ENCODE measurements at regions of chr3 and their contacts with region 1.

Region 1: DNA sequence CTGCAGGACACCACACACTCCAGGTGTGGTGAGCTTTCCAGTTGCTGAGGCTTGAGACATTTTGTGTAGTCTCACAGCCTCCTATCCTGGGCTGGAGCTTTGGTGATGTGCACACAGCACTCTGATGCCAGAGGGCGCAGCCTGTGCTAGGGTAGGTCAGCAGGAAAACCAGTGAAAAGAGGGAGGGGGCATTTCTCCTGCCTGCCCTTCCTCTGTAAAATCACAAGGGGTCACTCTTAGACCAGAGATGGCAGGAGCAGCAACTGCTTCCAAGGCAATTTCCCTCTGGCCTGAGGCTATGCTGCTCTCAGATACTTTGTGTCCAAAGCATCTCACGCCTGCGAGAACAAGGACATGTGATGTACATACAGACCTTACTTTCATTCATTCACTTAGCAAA is 16.5 kb upstream of the MUSTN1 start:
- DNase-seq: peak; percentile 38
- ATAC-seq: peak; percentile 96
- H3K4me3 ChIP-seq: no peak overlapping the region
- H3K27ac ChIP-seq: no peak overlapping the region
- H3K4me1 ChIP-seq: no peaks in the 10 kb centered on the region
- H3K27me3 ChIP-seq: no peaks in the 10 kb centered on the region
- CTCF ChIP-seq: peak; percentile 66 to 74 (median 69); a peak in 5 of 6 replicates
- POLR2A ChIP-seq: no peak
- RAD21 ChIP-seq: peak; percentile 92

Region 2: DNA sequence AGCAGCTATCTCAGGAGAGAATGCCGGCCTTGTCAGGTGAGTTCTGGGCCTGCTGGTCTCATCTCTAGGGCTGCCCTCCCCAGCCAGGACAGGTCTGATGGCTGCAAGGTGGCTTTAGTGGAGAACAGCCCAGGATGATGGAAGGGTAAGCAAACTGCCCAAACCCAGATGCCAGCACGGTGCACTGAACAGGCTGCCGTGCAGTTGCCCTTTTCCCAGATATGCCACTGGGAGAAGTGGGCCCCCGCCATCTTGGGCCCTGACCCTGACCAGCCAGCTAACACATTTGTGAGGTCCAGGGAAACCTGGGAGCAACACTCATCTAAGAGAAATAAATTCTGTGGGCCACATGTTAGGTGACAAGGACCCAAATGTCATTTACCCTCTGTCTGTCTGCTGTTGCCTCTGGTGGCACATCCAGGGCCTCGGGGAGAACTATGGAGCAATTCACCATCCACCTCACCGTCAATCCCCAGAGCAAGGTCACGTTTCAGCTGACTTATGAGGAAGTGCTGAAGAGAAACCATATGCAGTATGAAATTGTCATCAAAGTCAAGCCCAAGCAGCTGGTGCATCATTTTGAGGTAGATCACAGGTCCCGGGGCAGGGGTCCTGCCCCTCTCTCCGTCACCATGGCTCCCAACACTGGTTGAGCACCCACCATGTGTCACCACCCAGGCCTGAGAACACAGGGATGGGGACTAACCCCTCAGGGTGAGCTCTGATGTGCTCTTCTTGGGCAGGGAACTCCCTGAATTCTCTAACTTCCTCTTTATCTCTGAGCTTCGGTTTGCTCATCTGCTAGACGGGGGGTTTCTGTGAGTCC is 72.1 kb before region 1 on chr3:
- CTCF ChIA-PET with region 1: no interaction called
- POLR2A ChIA-PET with region 1: no interaction called
- RAD21 ChIA-PET with region 1: no interaction called
- intact Hi-C with region 1: no loop called
- DNase-seq: no peak
- ATAC-seq: no peak
- H3K4me3 ChIP-seq: no peak overlapping the region
- H3K27ac ChIP-seq: no peak overlapping the region
- H3K4me1 ChIP-seq: peaks cover 0 to 8% of the 10 kb centered on the region in 2 experiments; a peak in 1 of 4 replicates
- H3K27me3 ChIP-seq: peaks cover 30% of the 10 kb centered on the region
- CTCF ChIP-seq: no peak
- POLR2A ChIP-seq: no peak
- RAD21 ChIP-seq: no peak

Region 3: DNA sequence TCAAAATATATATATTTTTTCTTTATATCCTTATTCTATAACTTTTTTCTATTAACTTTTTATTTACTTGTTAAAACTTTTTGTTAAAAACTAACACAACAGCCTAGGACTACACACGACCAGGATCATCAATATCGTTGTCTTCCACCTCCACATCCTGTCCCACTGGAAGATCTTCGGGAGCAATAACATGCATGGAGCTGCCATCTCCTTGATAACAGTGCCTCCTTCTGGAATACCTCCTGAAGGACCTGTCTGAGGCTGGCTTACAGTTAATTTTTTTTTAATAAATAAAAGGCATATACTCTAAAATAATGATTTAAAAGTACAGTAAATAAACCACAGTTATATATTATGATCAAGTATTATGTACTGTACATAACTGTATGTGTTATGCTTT is 135.6 kb after region 1 on chr3:
- CTCF ChIA-PET with region 1: no interaction called
- POLR2A ChIA-PET with region 1: no interaction called
- RAD21 ChIA-PET with region 1: no interaction called
- intact Hi-C with region 1: loop called (anchors 1 kb)
- DNase-seq: no peak
- ATAC-seq: no peak
- H3K4me3 ChIP-seq: no peak overlapping the region
- H3K27ac ChIP-seq: no peak overlapping the region
- H3K4me1 ChIP-seq: no peaks in the 10 kb centered on the region
- H3K27me3 ChIP-seq: no peaks in the 10 kb centered on the region
- CTCF ChIP-seq: peak in 2 of 3 experiments; percentile 36 to 39; a peak in 3 of 6 replicates
- POLR2A ChIP-seq: no peak
- RAD21 ChIP-seq: peak; percentile 57

Region 4: GRCh38 chr3:53056442-53056841 is 205.1 kb after region 1 on chr3:
- CTCF ChIA-PET with region 1: no interaction called
- POLR2A ChIA-PET with region 1: no interaction called
- RAD21 ChIA-PET with region 1: no interaction called
- intact Hi-C with region 1: loop called (anchors 1 kb)
- DNase-seq: no peak
- ATAC-seq: peak; percentile 98
- H3K4me3 ChIP-seq: no peak overlapping the region
- H3K27ac ChIP-seq: no peak overlapping the region
- H3K4me1 ChIP-seq: no peaks in the 10 kb centered on the region
- H3K27me3 ChIP-seq: no peaks in the 10 kb centered on the region
- CTCF ChIP-seq: peak in 2 of 3 experiments; percentile 54 to 61; a peak in 4 of 6 replicates
- POLR2A ChIP-seq: no peak
- RAD21 ChIP-seq: peak; percentile 30

Region 5: GRCh38 chr3:53072653-53073552 is 221.6 kb after region 1 on chr3:
- CTCF ChIA-PET with region 1: no interaction called
- POLR2A ChIA-PET with region 1: no interaction called
- RAD21 ChIA-PET with region 1: no interaction called
- intact Hi-C with region 1: loop called (anchors 1 kb)
- DNase-seq: peak; percentile 48
- ATAC-seq: peak; percentile 93
- H3K4me3 ChIP-seq: peak overlapping the region; percentile 46 to 62
- H3K27ac ChIP-seq: peak overlapping the region; percentile 47; the same call in 1 of the 2 replicates
- H3K4me1 ChIP-seq: peaks cover 6 to 16% of the 10 kb centered on the region in 2 experiments; a peak in 3 of 4 replicates
- H3K27me3 ChIP-seq: no peaks in the 10 kb centered on the region
- CTCF ChIP-seq: peak; percentile 76 to 91 (median 89); a peak in 5 of 6 replicates
- POLR2A ChIP-seq: peak; percentile 39
- RAD21 ChIP-seq: peak; percentile 95

Region 6: DNA sequence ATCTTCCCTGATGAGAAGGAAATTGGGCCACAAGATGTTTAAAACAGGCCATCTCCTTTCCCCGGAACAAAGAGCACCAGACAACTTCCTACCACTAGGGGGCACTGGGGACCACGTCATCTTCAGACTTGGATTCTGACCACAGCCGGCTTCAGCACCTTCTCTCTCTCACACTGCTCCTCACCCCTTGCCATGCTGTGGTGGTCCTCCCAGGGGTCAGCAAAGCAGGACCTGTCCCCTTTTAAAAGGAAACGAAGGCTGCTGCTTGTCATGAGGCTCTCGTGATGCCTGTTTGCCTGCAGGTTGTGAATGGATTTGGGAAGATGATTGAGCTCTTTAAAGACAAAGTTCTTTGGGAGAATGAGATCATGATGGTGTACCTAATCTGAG is 262.7 kb after region 1 on chr3:
- CTCF ChIA-PET with region 1: interaction called, 3 read pairs
- POLR2A ChIA-PET with region 1: no interaction called
- RAD21 ChIA-PET with region 1: no interaction called
- intact Hi-C with region 1: loop called (anchors 1 kb)
- DNase-seq: peak; percentile 54
- ATAC-seq: peak; percentile 86
- H3K4me3 ChIP-seq: no peak overlapping the region
- H3K27ac ChIP-seq: no peak overlapping the region
- H3K4me1 ChIP-seq: no peaks in the 10 kb centered on the region; a peak in 1 of 4 replicates
- H3K27me3 ChIP-seq: no peaks in the 10 kb centered on the region
- CTCF ChIP-seq: peak; percentile 81 to 97 (median 94)
- POLR2A ChIP-seq: no peak
- RAD21 ChIP-seq: peak; percentile 92

Region 7: DNA sequence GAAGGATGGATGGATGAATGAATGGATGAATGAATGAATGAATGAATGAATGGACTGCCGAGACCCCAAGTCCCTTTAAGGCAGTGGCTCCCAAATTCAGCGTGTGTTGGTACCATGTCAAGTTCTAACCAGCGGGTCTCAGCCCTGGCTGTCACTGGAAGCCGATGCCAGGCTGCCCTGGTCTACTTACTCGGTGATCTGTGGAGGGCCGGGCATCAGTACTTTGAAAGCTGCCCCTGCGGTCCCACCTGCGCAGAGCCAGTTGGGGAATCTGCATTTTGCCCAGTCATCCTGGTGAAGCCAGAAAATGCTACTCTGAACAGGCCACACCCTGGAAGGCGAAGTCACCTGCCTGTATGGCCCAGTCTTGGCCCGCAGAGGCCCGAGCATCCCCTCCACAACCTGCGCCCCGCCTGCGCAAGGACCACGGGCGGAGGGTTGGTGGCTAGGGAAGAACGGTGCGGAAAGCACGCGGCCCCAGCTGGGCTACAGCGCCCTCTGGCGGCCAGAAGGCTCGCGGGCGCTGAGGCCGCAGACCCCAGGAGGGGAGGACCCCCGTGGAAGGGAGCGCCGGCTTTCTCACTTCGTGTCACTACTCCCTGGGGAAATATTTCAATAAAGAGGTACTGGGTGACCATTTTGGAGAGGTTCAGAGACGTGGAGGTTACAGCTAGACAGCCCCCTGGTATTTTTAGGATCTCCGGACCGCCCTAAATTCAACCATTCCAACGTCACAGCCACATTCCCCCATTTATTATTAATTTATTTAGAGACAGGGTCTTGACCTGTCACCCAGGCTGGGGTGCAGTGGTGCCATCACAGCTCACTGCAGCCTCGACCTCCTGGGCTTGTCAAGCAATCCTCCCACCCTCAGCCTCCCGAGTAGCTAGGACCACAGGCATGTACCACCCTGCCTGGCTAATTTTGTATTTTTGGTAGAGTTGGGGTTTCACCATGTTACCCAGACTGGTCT is 344.5 kb after region 1 on chr3:
- CTCF ChIA-PET with region 1: no interaction called
- POLR2A ChIA-PET with region 1: no interaction called
- RAD21 ChIA-PET with region 1: no interaction called
- intact Hi-C with region 1: loop called (anchors 5 kb)
- DNase-seq: peak; percentile 12
- ATAC-seq: peak; percentile 58
- H3K4me3 ChIP-seq: 0 out of 4 replicates have a peak overlapping the region, but pooled peaks of 1 of the 2 experiments have one; percentile 27
- H3K27ac ChIP-seq: peak overlapping the region; percentile 85
- H3K4me1 ChIP-seq: peaks cover 18 to 52% of the 10 kb centered on the region in 2 experiments
- H3K27me3 ChIP-seq: no peaks in the 10 kb centered on the region
- CTCF ChIP-seq: peak; percentile 92 to 99 (median 98)
- POLR2A ChIP-seq: no peak
- RAD21 ChIP-seq: peak; percentile 94